ENCODE measurements at regions of chr13 and their contacts with region 1.

Region 1: DNA sequence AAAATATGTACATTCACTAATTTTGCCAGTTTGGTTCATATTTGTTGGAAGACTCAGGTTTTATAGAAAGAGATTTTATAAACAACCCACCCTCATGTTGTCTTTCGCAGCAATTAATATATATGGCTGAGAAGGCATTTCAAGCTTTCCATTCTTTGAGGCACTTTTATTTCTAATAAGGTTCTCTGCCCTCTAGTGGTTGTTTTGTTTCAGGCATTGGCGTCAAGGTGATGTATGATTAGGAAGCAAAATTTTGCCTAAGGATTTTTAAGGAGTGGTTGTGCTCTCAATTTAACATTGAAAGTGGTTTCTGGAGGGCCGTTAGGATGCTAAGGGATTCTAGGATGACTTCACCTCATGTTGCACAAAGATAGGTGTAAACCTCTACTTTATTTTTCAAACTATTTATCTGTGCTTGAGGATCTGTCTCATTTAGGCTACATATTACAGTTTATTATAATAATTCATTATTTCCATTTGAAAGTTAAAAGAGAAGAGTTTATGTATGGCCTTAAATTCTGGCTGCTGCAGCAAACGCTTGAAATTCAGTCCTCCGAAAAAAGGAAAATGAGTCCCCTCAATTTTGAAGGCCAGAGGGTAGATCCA is 35.9 kb downstream of the OXGR1 start:
- DNase-seq: peak in 1 of 10 donors; percentile 23
- H3K4me3 ChIP-seq: no peak overlapping the region
- H3K27ac ChIP-seq: no peak overlapping the region
- H3K27me3 ChIP-seq: no peaks in the 10 kb centered on the region
- CTCF ChIP-seq: peak; percentile 58 to 91 (median 82)

Region 2: DNA sequence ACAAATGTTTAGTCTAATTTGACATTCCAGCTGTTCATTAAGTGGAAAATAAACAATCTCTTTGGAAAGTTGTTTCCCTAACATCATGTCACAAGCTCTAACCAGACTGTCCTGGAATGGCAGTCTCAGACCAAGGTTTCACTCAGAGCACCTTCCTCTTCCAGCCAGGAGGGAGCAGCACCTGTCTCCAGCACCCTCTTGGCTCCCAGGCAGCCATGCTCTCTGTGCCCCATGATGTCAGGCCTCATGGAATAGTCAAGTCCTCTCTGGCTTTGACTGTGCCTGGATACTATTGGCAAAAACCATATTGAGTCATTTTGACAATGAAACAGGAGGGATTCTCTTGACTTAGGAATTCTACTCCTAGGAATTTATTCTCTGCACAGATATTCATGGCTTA is 135.5 kb before region 1 on chr13:
- intact Hi-C with region 1: loop called in 1 of 2 experiments (anchors 10 kb)
- DNase-seq: peak in 1 of 10 donors; percentile 48
- H3K4me3 ChIP-seq: no peak overlapping the region
- H3K27ac ChIP-seq: peak overlapping the region in 3 of 59 donors; percentile 18 to 74 (median 40)
- H3K27me3 ChIP-seq: no peaks in the 10 kb centered on the region
- CTCF ChIP-seq: peak in 26 of 56 donors; percentile 9 to 50 (median 18)

Region 3: GRCh38 chr13:96898646-96899254 is 59.6 kb before region 1 on chr13:
- intact Hi-C with region 1: loop called in 1 of 2 experiments (anchors 5 kb)
- DNase-seq: peak in 2 of 10 donors; percentile 31 to 38
- H3K4me3 ChIP-seq: peak overlapping the region in 28 of 59 donors; percentile 5 to 50 (median 28)
- H3K27ac ChIP-seq: peak overlapping the region in 57 of 59 donors; percentile 4 to 92 (median 75)
- H3K27me3 ChIP-seq: no peaks in the 10 kb centered on the region
- CTCF ChIP-seq: no peak

Region 4: DNA sequence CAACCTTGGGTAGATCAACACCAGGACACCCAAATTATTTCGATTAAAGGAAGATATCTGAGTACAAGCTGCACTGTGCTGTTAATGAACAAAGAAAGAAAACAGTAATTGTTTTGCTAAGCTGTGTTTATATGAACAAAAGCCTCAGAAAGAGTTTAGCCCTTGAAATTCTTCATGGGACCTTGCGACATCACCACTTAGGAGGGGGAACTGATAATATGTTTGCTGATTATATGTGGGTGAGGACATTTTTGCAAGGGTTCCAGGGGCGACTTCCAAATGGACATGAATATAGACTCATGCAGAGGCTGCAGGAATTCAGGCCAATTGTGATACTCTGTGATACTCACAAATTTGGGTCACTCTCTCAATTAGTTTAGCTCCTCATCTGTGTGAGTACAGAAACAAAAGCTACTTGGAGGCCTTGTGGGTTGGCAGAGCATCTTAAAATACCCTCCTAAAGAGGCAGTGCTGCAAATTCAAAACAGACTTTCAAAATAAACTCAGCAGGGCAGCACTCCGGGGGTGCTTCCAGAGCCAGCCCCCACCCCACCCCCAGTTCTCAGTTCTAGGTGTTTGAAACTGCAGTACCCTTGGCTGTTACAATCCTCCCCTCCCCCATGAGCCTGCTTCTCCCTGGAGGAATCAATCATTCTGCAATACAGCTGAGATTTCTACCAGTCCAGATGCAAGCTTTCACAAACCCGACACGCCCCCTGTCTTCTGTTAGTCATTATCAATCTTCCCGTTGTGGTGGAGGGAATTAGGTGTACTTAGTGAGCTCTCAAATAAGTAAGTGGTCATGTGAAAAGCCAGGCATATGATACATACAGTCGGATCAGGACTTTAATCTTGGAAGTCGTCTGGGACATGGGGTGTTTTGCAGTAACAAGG is 166.8 kb after region 1 on chr13:
- intact Hi-C with region 1: no loop called
- DNase-seq: peak in 1 of 10 donors; percentile 44
- H3K4me3 ChIP-seq: peak overlapping the region in 15 of 59 donors; percentile 3 to 30 (median 15)
- H3K27ac ChIP-seq: peak overlapping the region in 52 of 59 donors; percentile 5 to 86 (median 61)
- H3K27me3 ChIP-seq: no peaks in the 10 kb centered on the region
- CTCF ChIP-seq: peak in 45 of 56 donors; percentile 11 to 58 (median 36)

Measured in dorsolateral prefrontal cortex (tissue), 120 donors.